ENCODE measurements at regions of chr15 and their contacts with region 1.

Region 1: GRCh38 chr15:89812011-89812835 is 2.4 kb downstream of the ANPEP start:
- DNase-seq: no peak
- H3K4me3 ChIP-seq: no peak overlapping the region
- CTCF ChIP-seq: no peak

Region 2: DNA sequence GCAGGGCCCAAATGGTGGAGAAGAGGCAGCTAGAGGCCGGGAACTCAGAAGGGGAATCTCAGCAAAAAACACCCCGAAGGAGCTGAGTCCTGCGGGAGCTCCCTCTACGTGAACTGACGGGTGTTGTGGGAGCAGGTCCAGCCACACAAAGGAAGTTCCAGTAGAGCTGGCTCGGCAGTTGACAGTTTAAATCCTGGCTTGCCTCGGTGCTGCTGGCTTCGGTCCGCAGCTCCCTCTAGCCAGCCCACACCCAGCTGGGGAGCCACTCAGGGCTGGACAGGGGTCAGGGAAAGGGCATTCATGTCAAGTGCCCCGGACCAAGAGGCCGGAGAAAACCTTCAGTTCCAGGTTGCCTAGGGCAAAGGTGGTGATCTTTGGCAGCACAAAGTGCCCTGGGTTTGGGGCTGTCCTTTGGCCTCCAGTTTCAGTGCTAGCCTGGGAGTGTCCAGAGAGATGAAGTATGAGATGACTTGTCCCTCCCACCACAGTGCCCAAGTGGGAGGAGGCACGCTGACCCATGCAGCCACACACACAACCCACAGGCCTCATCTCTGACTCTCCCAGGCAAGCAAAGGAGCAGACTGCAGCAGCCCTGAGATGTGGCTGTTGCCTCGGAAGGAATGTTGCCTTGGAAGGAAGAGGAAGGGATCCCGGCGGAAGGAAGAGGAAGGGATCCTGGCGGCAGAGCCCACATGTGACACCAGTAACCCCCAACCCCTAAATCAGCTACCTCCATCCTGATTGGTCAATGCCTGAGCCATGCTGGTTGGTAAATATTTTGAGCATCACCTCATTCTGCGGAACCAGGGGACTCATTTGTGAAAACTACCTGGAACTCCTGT is 16.2 kb after region 1 on chr15:
- CTCF ChIA-PET with region 1: no interaction called
- POLR2A ChIA-PET with region 1: interaction called, 10 read pairs
- DNase-seq: no peak
- H3K4me3 ChIP-seq: no peak overlapping the region
- CTCF ChIP-seq: no peak

Region 3: GRCh38 chr15:89836255-89837133 is 24.3 kb after region 1 on chr15:
- CTCF ChIA-PET with region 1: interaction called, 5 read pairs
- POLR2A ChIA-PET with region 1: interaction called, 15 read pairs
- DNase-seq: peak; percentile 93
- H3K4me3 ChIP-seq: peak overlapping the region; percentile 35
- CTCF ChIP-seq: no peak

Measured in AG04449 (cell line).